ENCODE measurements at regions of chr2 and their contacts with region 1.

Region 1: GRCh38 chr2:152189622-152190495 is 14.3 kb upstream of the STAM2 start:
- DNase-seq: no peak
- H3K4me3 ChIP-seq: no peak overlapping the region
- H3K27ac ChIP-seq: no peak overlapping the region
- H3K4me1 ChIP-seq: no peaks in the 10 kb centered on the region
- H3K27me3 ChIP-seq: no peaks in the 10 kb centered on the region
- CTCF ChIP-seq: peak; percentile 61 to 85 (median 80)
- EP300 ChIP-seq: no peak
- POLR2A ChIP-seq: no peak

Region 2: GRCh38 chr2:152405206-152406118 is 215.6 kb after region 1 on chr2:
- intact Hi-C with region 1: no loop called
- DNase-seq: no peak
- H3K4me3 ChIP-seq: no peak overlapping the region
- H3K27ac ChIP-seq: peak overlapping the region in 2 of 4 donors; percentile 13 to 44
- H3K4me1 ChIP-seq: peaks cover 0 to 36% (median 30%) of the 10 kb centered on the region in 4 donors
- H3K27me3 ChIP-seq: no peaks in the 10 kb centered on the region
- CTCF ChIP-seq: no peak
- EP300 ChIP-seq: no peak
- POLR2A ChIP-seq: no peak

Region 3: DNA sequence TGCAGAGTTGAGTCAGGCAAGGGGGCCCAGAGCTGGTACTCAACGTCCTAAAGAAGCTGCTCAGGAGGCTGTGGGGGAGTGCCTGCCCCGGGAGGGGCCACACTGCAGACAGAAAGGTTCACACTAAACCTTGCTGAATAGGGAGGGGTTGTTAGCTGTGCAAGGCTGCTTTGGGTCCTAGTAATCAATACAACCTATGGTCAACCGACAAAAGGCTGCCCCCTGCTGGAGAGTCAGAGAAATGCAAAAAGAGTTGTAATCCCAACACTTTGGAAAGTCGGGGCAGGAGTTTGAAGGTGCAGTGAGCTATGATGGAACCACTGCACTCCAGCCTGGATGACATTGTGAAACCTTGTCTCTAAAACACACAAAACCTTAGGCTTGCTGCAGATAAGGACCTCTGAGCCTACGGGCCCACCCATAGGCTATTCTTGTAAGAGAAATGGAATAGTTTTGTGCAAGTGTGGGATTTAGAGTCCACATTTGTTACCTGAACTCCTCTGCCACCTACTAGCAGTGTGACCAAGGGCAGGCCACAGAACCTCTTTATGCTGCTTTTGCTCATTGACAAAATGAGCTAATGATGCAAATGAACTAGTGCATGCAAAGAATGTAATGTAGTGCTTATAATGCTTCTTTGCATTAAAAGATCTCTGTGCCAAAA is 445.9 kb after region 1 on chr2:
- intact Hi-C with region 1: loop called (anchors 2 kb)
- DNase-seq: peak; percentile 67
- H3K4me3 ChIP-seq: no peak overlapping the region
- H3K27ac ChIP-seq: no peak overlapping the region
- H3K4me1 ChIP-seq: no peaks in the 10 kb centered on the region
- H3K27me3 ChIP-seq: no peaks in the 10 kb centered on the region
- CTCF ChIP-seq: peak; percentile 54 to 88 (median 72)
- EP300 ChIP-seq: no peak
- POLR2A ChIP-seq: no peak

Measured in sigmoid colon (tissue), 7 donors.